Dorsolateral prefrontal cortex (tissue), 120 donors: ENCODE measurements at regions of chr1 and their contacts with region 1.

Region 1: DNA sequence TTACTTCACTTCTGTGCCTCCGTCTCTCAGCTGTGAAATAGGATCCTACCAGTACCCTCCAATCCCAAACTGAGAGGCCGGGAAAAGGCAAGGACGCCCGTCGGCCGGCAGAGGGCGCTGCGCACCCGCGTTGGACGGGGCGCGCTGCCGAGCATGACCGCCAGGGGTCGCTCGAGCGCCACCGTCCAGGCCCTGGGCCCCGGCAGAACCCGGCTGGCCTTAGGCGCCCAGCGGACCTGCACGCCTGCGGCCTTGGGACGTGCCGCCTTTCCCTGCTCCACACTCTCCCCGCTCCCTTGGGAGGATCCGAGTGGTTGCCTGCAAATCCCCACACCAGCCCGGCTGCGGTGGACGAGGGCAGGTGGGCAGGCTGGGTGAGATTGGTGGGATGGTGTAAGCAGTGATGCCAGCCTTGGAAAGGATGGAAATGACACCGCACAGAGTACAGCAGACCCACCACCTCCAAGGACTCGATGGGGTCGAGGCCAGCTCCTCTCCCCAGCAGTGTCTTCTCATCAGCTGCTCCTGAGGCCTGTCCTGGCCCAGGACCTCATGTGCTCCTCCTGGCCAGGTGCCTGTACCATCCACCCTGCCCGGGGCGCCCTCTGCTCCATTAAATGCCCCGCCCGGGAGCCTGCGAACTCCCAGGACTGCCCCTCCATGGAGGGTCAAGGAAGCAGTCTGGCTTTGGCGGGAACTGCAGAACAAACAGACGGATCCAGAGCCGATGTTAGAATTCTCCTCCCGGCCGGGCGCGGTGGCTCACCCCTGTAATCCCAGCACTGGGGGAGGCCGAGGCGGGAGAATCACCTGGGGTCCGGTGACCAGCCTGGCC is 47.4 kb upstream of the LBR start:
- DNase-seq: peak in 7 of 10 donors; percentile 23 to 84 (median 49)
- H3K4me3 ChIP-seq: peak overlapping the region in 48 of 59 donors; percentile 7 to 59 (median 34)
- H3K27ac ChIP-seq: peak overlapping the region in 22 of 59 donors; percentile 1 to 84 (median 52)
- H3K27me3 ChIP-seq: no peaks in the 10 kb centered on the region
- CTCF ChIP-seq: peak; percentile 100

Region 2: DNA sequence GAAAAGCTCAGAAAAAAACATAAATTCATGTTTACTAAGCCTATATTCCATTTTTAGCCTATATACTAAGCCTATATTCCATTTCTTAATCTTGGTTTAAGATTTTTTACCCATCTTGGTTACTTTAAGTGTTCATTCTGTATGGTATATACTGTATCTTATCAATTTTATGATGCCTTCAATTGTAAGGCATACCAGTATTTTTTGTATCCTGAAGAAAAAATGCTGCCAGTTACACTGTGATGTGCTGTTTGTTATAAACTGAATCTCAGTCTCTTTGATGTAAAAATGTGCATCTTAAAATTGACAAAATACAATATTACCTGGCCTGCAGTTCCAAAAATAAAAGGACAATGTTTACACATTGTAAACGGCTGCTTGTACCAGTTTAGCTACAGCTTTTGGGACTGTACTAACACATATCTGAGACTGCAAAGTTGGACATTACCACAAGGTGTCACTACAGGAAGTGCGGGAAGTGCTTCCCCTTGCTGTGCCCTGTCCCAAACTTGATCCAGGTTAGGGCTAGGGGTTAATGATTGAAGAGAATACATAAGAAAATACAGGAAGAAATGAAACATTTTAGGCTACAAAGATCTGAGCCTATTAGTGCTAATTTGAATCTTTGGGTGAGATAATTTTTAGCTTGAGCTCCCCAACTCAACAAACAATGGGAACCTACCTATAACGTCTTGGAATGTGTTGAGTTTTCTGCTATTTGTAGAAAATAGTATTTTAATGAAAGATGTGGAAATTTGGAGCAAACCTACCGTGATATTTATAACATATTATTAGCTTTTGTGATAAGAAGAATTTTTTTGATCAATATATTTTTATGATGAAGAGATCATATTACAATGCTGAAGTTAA is 156.3 kb before region 1 on chr1:
- intact Hi-C with region 1: loop called in 1 of 2 experiments (anchors 10 kb)
- DNase-seq: peak in 1 of 10 donors; percentile 4
- H3K4me3 ChIP-seq: no peak overlapping the region
- H3K27ac ChIP-seq: no peak overlapping the region
- H3K27me3 ChIP-seq: peaks cover 0 to 4% (median 0%) of the 10 kb centered on the region in 45 donors
- CTCF ChIP-seq: peak; percentile 17 to 76 (median 58)

Region 3: GRCh38 chr1:225554216-225554812 is 79.1 kb after region 1 on chr1:
- intact Hi-C with region 1: loop called (anchors 5 kb)
- DNase-seq: no peak
- H3K4me3 ChIP-seq: no peak overlapping the region
- H3K27ac ChIP-seq: peak overlapping the region in 5 of 59 donors; percentile 2 to 34 (median 4)
- H3K27me3 ChIP-seq: no peaks in the 10 kb centered on the region
- CTCF ChIP-seq: peak in 55 of 56 donors; percentile 37 to 80 (median 69)

Region 4: GRCh38 chr1:225772323-225772768 is 297.1 kb after region 1 on chr1:
- intact Hi-C with region 1: loop called (anchors 1 to 2 kb)
- DNase-seq: peak; percentile 48 to 86 (median 84)
- H3K4me3 ChIP-seq: peak overlapping the region in 5 of 59 donors; percentile 1 to 24 (median 6)
- H3K27ac ChIP-seq: peak overlapping the region in 48 of 59 donors; percentile 3 to 87 (median 60)
- H3K27me3 ChIP-seq: no peaks in the 10 kb centered on the region
- CTCF ChIP-seq: peak; percentile 54 to 96 (median 85)

Region 5: GRCh38 chr1:225911191-225912130 is 436.3 kb after region 1 on chr1:
- intact Hi-C with region 1: loop called in 1 of 2 experiments (anchors 10 kb)
- DNase-seq: peak in 5 of 10 donors; percentile 30 to 78 (median 47)
- H3K4me3 ChIP-seq: peak overlapping the region in 24 of 59 donors; percentile 2 to 41 (median 18)
- H3K27ac ChIP-seq: peak overlapping the region in 20 of 59 donors; percentile 7 to 74 (median 36)
- H3K27me3 ChIP-seq: no peaks in the 10 kb centered on the region
- CTCF ChIP-seq: peak; percentile 33 to 93 (median 81)